ENCODE measurements at regions of chr10 and their contacts with region 1.

Region 1: GRCh38 chr10:17847585-17848296 is 38.6 kb downstream of the MRC1 start:
- DNase-seq: no peak
- ATAC-seq: no peak
- H3K4me3 ChIP-seq: no peak overlapping the region
- H3K27ac ChIP-seq: no peak overlapping the region
- H3K4me1 ChIP-seq: no peaks in the 10 kb centered on the region
- H3K27me3 ChIP-seq: no peaks in the 10 kb centered on the region
- CTCF ChIP-seq: peak; percentile 58

Region 2: GRCh38 chr10:18214691-18215563 is 367.2 kb after region 1 on chr10:
- CTCF ChIA-PET with region 1: no interaction called
- POLR2A ChIA-PET with region 1: no interaction called
- in situ Hi-C with region 1: no loop called
- intact Hi-C with region 1: loop called (anchors 5 kb)
- DNase-seq: peak; percentile 24
- ATAC-seq: 0 out of 2 replicates have a peak, but pooled peaks have one; percentile 63
- H3K4me3 ChIP-seq: no peak overlapping the region
- H3K27ac ChIP-seq: no peak overlapping the region
- H3K4me1 ChIP-seq: no peaks in the 10 kb centered on the region
- H3K27me3 ChIP-seq: no peaks in the 10 kb centered on the region
- CTCF ChIP-seq: peak; percentile 80

Measured in Panc1 (cell line).